B cell (primary cell): ENCODE measurements at regions of chr17 and their contacts with region 1.

Region 1: GRCh38 chr17:7915611-7916382 is at the start of gene RNF227:
- DNase-seq: peak; percentile 93
- ATAC-seq: peak; percentile 82
- H3K4me3 ChIP-seq: peak within 1 kb of the TSS; percentile 9 to 81 (median 76)
- H3K4me3 Mint-ChIP-seq: peak within 1 kb of the TSS; percentile 93
- H3K27ac ChIP-seq: peak within 1 kb of the TSS; percentile 69 to 75
- H3K27ac Mint-ChIP-seq: peak within 1 kb of the TSS; percentile 93
- H3K4me1 ChIP-seq: peaks cover 16 to 20% of the 10 kb centered on the region in 2 donors
- H3K4me1 Mint-ChIP-seq: peaks cover 24% of the 10 kb centered on the region
- H3K27me3 ChIP-seq: no peaks in the 10 kb centered on the region
- H3K27me3 Mint-ChIP-seq: no peaks in the 10 kb centered on the region
- CTCF ChIP-seq: no peak
- total RNA-seq, gene RNF227: 3.8 and 4.3 TPM in 2 replicates

Region 2: DNA sequence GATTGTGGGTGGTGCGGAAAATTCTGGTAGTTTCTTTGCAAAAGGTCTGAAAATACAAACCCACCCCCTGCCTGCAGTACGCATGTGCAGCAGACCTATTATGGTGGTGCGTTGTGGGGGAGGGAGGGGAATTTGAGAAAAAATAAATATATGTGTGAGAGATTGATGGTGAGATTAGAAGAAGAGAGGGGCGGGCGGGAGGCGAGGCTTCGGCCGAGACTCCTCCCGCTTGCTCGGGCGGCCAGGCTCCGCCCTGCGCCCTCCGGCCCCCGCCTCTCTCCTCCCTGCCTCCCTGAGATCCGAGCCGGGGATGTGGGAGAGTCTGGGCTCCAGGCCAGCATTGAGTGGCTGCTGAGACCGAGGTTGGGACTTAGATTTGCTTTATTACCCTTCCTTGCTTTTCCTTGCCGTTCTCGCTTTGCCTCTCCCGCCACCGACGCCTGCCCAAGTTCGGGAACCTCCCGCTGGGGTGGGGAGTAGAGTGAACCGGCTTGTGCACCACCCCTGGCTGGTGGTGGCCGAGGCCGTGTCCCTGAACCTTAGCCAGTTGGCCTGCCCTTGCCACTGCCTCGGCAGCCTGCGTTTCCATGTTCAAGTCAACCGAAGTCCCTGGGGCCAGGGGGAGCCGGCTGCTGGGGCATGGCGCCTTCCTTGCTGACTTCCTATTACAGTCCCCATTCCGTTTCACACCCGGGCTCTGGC is 28.2 kb before region 1 on chr17:
- CTCF ChIA-PET with region 1: interaction called, 3 read pairs
- POLR2A ChIA-PET with region 1: interaction called, 4 read pairs
- intact Hi-C with region 1: loop called (anchors 1 kb)
- DNase-seq: peak; percentile 86
- ATAC-seq: peak; percentile 75
- H3K4me3 ChIP-seq: peak overlapping the region; percentile 65 to 95 (median 79)
- H3K4me3 Mint-ChIP-seq: no peak overlapping the region
- H3K27ac ChIP-seq: peak overlapping the region; percentile 46 to 68
- H3K27ac Mint-ChIP-seq: no peak overlapping the region
- H3K4me1 ChIP-seq: peaks cover 19 to 36% of the 10 kb centered on the region in 2 donors
- H3K4me1 Mint-ChIP-seq: peaks cover 3% of the 10 kb centered on the region
- H3K27me3 ChIP-seq: no peaks in the 10 kb centered on the region
- H3K27me3 Mint-ChIP-seq: no peaks in the 10 kb centered on the region
- CTCF ChIP-seq: no peak

Region 3: GRCh38 chr17:7931709-7932482 is 16.1 kb after region 1 on chr17 and contains the starts of genes CNTROB and TRAPPC1:
- CTCF ChIA-PET with region 1: interaction called, 34 read pairs
- POLR2A ChIA-PET with region 1: interaction called, 21 read pairs
- intact Hi-C with region 1: loop called (anchors 1 kb)
- DNase-seq: peak; percentile 100
- ATAC-seq: peak; percentile 98
- H3K4me3 ChIP-seq: peak within 1 kb of the TSS; percentile 75 to 98 (median 89)
- H3K4me3 Mint-ChIP-seq: peak within 1 kb of the TSS; percentile 95
- H3K27ac ChIP-seq: peak within 1 kb of the TSS; percentile 77 to 88
- H3K27ac Mint-ChIP-seq: peak within 1 kb of the TSS; percentile 95
- H3K4me1 ChIP-seq: peaks cover 18 to 33% of the 10 kb centered on the region in 2 donors
- H3K4me1 Mint-ChIP-seq: peaks cover 44% of the 10 kb centered on the region
- H3K27me3 ChIP-seq: no peaks in the 10 kb centered on the region
- H3K27me3 Mint-ChIP-seq: no peaks in the 10 kb centered on the region
- CTCF ChIP-seq: no peak
- total RNA-seq, gene CNTROB: 34.8 and 40.4 TPM in 2 replicates
- total RNA-seq, gene TRAPPC1: 86.0 and 118 TPM in 2 replicates

Region 4: GRCh38 chr17:7956228-7956965 is 40.6 kb after region 1 on chr17:
- CTCF ChIA-PET with region 1: no interaction called
- POLR2A ChIA-PET with region 1: no interaction called
- intact Hi-C with region 1: no loop called
- DNase-seq: no peak
- ATAC-seq: no peak
- H3K4me3 ChIP-seq: no peak overlapping the region
- H3K4me3 Mint-ChIP-seq: no peak overlapping the region
- H3K27ac ChIP-seq: no peak overlapping the region
- H3K27ac Mint-ChIP-seq: no peak overlapping the region
- H3K4me1 ChIP-seq: peaks cover 4 to 5% of the 10 kb centered on the region in 2 donors
- H3K4me1 Mint-ChIP-seq: peaks cover 5% of the 10 kb centered on the region
- H3K27me3 ChIP-seq: peaks cover 0 to 2% (median under 1%) of the 10 kb centered on the region in 4 experiments
- H3K27me3 Mint-ChIP-seq: peaks cover 12% of the 10 kb centered on the region
- CTCF ChIP-seq: no peak

Region 5: DNA sequence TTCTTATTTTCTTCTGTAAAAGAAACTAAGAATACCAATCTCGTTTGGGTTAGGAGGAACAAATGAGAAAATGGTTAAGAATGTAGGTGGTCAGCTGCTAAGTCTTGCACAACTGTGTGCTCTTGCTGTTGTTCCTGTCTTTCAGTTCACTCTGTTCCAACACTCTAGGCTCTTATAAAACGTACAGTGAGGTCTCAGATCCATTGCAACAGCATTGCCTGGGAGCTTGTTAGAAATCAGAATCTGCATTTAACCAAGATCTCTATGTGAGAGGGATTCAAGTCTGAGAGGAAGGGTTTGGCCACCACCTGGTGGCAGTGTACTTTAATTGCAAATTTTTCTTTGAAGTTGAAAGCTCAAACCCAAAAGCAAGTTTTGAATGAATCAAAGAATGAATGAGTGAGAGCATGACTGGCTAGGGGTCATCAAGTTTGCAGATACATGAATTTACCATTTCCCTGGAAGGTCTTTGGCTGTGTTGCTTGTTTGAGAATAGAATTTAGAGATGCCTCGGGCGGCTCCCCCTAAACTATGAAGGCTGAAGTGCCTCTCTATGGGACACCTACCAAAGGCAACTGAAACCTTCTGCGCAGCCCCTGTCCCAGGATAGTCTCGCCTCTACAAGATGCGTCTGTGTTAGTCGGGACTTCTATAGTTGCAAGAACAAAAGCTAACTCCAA is 125.6 kb after region 1 on chr17:
- CTCF ChIA-PET with region 1: interaction called, 23 read pairs
- POLR2A ChIA-PET with region 1: no interaction called
- intact Hi-C with region 1: no loop called
- DNase-seq: peak; percentile 64
- ATAC-seq: no peak
- H3K4me3 ChIP-seq: no peak overlapping the region
- H3K4me3 Mint-ChIP-seq: no peak overlapping the region
- H3K27ac ChIP-seq: no peak overlapping the region
- H3K27ac Mint-ChIP-seq: no peak overlapping the region
- H3K4me1 ChIP-seq: peaks cover 5 to 8% of the 10 kb centered on the region in 2 donors
- H3K4me1 Mint-ChIP-seq: peaks cover 3% of the 10 kb centered on the region
- H3K27me3 ChIP-seq: peaks cover 0 to 14% (median 7%) of the 10 kb centered on the region in 4 experiments
- H3K27me3 Mint-ChIP-seq: peaks cover 42% of the 10 kb centered on the region
- CTCF ChIP-seq: peak; percentile 56